Activated naive CD4-positive, alpha-beta T cell treated with anti-CD3 and anti-CD28 coated beads, Interleukin-2, amount 10 ng/mL, durations not matched to agents 7 days and 5 days (primary cell): ENCODE measurements at regions of chrX and their contacts with region 1.

Region 1: DNA sequence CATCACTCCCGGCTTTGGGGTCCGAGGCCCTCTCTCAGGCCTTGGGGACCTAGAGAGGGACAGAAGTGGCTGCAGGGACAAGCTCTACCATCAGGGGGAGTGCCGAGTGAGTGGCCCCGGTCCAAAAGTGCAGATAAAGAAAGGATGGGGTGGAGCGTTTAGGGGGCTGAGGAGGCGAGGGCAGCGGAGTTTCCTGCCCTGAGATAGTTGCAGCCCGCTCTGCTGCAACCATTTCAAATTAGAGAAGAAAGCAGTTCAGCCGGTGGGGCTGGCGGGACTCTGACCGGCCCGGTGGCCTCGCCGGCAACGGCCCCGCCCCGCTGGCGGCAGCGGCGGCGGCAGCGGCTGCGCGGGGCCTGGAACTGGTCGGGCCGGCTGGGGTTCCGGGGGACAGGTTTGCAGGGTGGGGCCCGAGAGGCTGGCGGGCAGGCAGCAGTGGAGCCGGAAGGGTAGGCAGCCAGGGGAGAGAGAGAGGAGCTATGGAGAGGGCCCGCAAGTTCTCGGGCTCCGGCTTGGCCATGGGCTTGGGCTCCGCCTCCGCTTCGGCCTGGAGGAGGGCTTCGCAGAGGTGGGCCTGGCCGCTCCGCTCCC is 7.6 kb downstream of the DLG3 start:
- DNase-seq: peak; percentile 66
- H3K4me3 Mint-ChIP-seq: peak overlapping the region; percentile 82
- H3K27ac Mint-ChIP-seq: peak overlapping the region; percentile 80
- H3K4me1 Mint-ChIP-seq: peaks cover 51% of the 10 kb centered on the region
- H3K27me3 Mint-ChIP-seq: peaks cover 15% of the 10 kb centered on the region

Region 2: GRCh38 chrX:70231666-70232065 is 220.6 kb before region 1 on chrX:
- CTCF ChIA-PET with region 1: no interaction called
- DNase-seq: no peak
- H3K4me3 Mint-ChIP-seq: no peak overlapping the region
- H3K27ac Mint-ChIP-seq: no peak overlapping the region
- H3K4me1 Mint-ChIP-seq: no peaks in the 10 kb centered on the region
- H3K27me3 Mint-ChIP-seq: no peaks in the 10 kb centered on the region

Region 3: DNA sequence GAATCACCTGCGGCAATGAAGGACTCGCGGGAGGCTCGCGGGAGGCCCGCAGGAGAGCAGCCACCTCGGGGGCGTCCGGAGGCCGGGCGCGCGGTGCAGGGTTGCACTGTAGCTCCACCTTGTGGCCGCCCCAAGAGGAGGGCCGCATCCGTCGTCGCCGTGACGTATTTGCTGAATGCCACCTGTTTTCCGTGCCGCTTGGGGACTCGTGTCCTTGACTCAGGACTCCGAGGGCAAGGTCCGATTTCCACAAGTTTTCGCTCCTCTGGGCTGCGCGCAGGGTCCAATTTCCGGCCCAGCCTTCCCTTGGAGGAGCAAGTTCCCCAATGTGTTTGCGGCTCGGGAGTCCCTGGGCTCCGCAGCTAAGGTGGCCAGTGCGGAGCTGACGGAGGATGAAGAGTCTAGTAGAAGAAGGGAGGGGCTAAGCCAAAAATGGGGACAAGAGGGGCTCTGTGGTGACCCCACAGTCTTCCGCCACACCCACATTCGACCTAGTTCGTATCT is 18.3 kb before region 1 on chrX:
- CTCF ChIA-PET with region 1: interaction called, 11 read pairs
- DNase-seq: peak; percentile 81
- H3K4me3 Mint-ChIP-seq: peak overlapping the region; percentile 84
- H3K27ac Mint-ChIP-seq: peak overlapping the region; percentile 88
- H3K4me1 Mint-ChIP-seq: peaks cover 27% of the 10 kb centered on the region
- H3K27me3 Mint-ChIP-seq: peaks cover 40% of the 10 kb centered on the region

Region 4: GRCh38 chrX:70554081-70554480 is 101.8 kb after region 1 on chrX:
- CTCF ChIA-PET with region 1: interaction called, 14 read pairs
- DNase-seq: no peak
- H3K4me3 Mint-ChIP-seq: no peak overlapping the region
- H3K27ac Mint-ChIP-seq: no peak overlapping the region
- H3K4me1 Mint-ChIP-seq: peaks cover 7% of the 10 kb centered on the region
- H3K27me3 Mint-ChIP-seq: peaks cover 5% of the 10 kb centered on the region

Region 5: GRCh38 chrX:70664726-70665125 is 212.5 kb after region 1 on chrX:
- CTCF ChIA-PET with region 1: interaction called, 10 read pairs
- DNase-seq: peak; percentile 20
- H3K4me3 Mint-ChIP-seq: no peak overlapping the region
- H3K27ac Mint-ChIP-seq: no peak overlapping the region
- H3K4me1 Mint-ChIP-seq: no peaks in the 10 kb centered on the region
- H3K27me3 Mint-ChIP-seq: peaks cover 10% of the 10 kb centered on the region

Region 6: GRCh38 chrX:70826715-70827114 is 374.5 kb after region 1 on chrX:
- CTCF ChIA-PET with region 1: no interaction called
- DNase-seq: no peak
- H3K4me3 Mint-ChIP-seq: no peak overlapping the region
- H3K27ac Mint-ChIP-seq: no peak overlapping the region
- H3K4me1 Mint-ChIP-seq: no peaks in the 10 kb centered on the region
- H3K27me3 Mint-ChIP-seq: no peaks in the 10 kb centered on the region